ENCODE measurements at regions of chr12 and their contacts with region 1.

Region 1: GRCh38 chr12:71642264-71642663 is 21.4 kb downstream of the ZFC3H1 start:
- DNase-seq: no peak
- ATAC-seq: no peak
- H3K4me3 ChIP-seq: no peak overlapping the region
- H3K27ac ChIP-seq: no peak overlapping the region
- H3K4me1 ChIP-seq: peaks cover 0 to 4% of the 10 kb centered on the region in 2 experiments; a peak in 2 of 5 replicates
- H3K27me3 ChIP-seq: no peaks in the 10 kb centered on the region
- CTCF ChIP-seq: no peak
- EP300 ChIP-seq: no peak
- POLR2A ChIP-seq: no peak
- RAD21 ChIP-seq: no peak

Region 2: DNA sequence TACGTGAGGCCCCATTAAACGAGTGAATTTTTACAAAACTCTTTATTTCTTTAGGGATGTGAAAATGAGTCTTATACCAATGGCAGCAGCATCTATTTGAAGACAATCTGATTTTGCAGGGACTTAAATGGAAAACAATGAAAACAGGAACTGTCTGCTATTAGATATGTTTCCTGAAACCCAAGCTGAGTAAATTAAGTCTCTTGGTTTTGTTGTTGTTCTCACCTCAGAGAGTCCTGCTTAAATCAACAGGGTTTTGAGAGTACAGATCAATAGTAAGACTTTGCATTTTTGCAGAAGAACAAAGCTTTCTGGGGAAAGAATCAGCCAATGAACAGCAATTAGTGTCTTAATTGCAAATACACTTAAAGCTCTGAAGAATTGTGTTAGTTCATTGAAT is 241.8 kb before region 1 on chr12:
- CTCF ChIA-PET with region 1: no interaction called
- POLR2A ChIA-PET with region 1: no interaction called
- in situ Hi-C with region 1: no loop called
- intact Hi-C with region 1: no loop called
- DNase-seq: no peak
- ATAC-seq: no peak
- H3K4me3 ChIP-seq: no peak overlapping the region
- H3K27ac ChIP-seq: no peak overlapping the region
- H3K4me1 ChIP-seq: no peaks in the 10 kb centered on the region
- H3K27me3 ChIP-seq: peaks cover 0 to 5% of the 10 kb centered on the region in 2 experiments; a peak in 1 of 5 replicates
- CTCF ChIP-seq: no peak
- EP300 ChIP-seq: no peak
- POLR2A ChIP-seq: no peak
- RAD21 ChIP-seq: no peak

Region 3: DNA sequence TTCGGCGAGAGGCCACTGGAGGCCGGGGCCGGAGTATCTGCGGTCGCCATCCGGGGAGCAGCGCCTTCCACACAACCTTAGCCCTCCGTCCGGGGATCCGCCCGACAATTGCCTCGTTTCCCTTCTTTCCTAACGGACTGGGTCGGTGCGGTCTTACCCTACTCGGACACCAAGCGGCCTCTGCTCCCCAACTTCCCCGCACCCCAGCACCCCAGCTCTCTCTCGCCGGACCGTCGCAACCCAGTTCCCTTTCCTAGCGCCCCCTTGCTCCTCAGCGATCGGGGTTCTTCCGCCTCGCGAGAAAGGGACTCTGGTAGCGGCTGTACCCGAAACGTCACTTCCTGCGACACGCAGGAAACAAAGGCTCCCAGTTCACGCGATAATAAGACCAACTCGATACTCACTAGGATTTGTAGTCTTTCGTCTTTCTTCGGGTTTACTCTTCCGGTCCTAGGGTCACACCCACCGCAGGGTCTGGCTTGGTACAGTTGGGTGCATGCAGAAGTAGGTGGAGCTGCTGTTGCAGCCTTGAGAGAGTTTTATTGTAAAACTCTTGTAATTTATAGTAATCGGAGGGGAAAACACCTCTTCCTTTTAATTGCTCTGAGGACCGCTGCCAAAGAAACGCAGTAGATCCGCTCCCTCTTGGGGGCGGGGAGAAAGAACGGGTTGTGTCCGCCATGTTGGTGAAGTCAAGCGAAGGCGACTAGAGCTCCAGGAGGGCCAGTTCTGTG is 21.5 kb after region 1 on chr12 and contains the start of gene ZFC3H1:
- CTCF ChIA-PET with region 1: no interaction called
- POLR2A ChIA-PET with region 1: interaction called, 18 read pairs
- in situ Hi-C with region 1: no loop called
- intact Hi-C with region 1: no loop called
- DNase-seq: peak; percentile 80 to 99 (median 86)
- ATAC-seq: peak; percentile 88
- H3K4me3 ChIP-seq: peak within 1 kb of the TSS; percentile 85
- H3K27ac ChIP-seq: peak within 1 kb of the TSS; percentile 97
- H3K4me1 ChIP-seq: peaks cover 11 to 12% of the 10 kb centered on the region in 2 experiments; a peak in 3 of 5 replicates
- H3K27me3 ChIP-seq: no peaks in the 10 kb centered on the region
- CTCF ChIP-seq: peak in 2 of 3 experiments; percentile 50 to 53; a peak in 4 of 6 replicates
- EP300 ChIP-seq: peak; percentile 33; the same call in 1 of the 2 replicates
- POLR2A ChIP-seq: peak; percentile 91
- RAD21 ChIP-seq: no peak
- polyA plus RNA-seq, gene ZFC3H1: 14.8 to 16.7 TPM

Region 4: DNA sequence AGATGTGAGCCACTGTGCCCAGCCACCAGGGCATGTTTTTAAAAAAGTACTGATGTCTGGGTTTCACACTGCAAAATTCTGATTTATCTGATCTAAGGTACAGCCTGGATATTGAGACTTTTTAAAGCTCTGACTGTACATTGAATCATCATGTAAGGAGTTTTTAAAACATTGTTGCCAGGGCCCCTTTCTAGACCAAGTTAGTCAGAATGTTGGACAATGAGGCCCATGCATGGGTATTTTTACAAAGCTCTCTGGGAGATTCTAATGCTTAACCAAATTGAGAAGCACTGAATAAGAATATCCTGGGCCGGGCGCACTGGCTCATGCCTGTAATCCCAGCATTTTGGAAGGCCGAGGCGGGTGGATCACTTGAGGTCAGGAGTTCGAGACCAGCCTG is 60.3 kb after region 1 on chr12:
- CTCF ChIA-PET with region 1: no interaction called
- POLR2A ChIA-PET with region 1: no interaction called
- in situ Hi-C with region 1: no loop called
- intact Hi-C with region 1: no loop called
- DNase-seq: no peak
- ATAC-seq: no peak
- H3K4me3 ChIP-seq: no peak overlapping the region
- H3K27ac ChIP-seq: no peak overlapping the region
- H3K4me1 ChIP-seq: no peaks in the 10 kb centered on the region; a peak in 2 of 5 replicates
- H3K27me3 ChIP-seq: no peaks in the 10 kb centered on the region
- CTCF ChIP-seq: no peak
- EP300 ChIP-seq: no peak
- POLR2A ChIP-seq: no peak
- RAD21 ChIP-seq: no peak